H1 (cell line): ENCODE measurements at regions of chr11 and their contacts with region 1.

Region 1: DNA sequence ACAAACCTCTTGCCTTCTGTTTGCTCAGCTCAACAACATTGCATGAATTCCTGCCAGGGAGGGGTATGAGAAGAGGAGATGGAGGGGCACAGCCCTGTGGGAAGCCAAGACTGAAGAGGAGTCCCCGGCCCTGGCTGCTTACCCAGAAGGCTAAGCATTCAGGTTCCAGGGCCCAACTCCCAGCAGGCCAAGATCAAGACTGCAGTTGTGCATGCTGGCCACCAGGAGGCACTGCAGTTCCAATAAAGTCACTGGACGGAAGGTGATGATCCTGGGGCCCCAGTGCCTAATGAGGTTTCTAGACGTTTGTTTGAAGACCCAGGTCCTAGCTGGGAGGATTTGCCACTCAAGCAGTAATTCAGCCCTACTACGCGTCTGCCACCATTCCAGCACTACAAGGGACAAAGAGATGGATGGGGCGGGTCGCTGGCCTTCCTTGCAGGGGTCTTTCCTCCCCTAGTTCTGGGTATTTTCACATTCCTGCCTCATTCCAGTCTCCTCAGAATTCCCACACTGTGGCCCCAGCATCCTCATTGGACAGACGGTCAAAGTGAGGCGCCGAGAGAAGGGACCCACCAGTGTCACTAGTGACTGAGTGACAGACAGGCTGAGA is 23.6 kb downstream of the ALX4 start:
- DNase-seq: peak in 1 of 2 experiments; percentile 89
- H3K4me3 ChIP-seq: no peak overlapping the region
- H3K27ac ChIP-seq: no peak overlapping the region
- H3K4me1 ChIP-seq: peaks cover 0 to 2% (median 0%) of the 10 kb centered on the region in 4 experiments; a peak in 1 of 7 replicates
- H3K27me3 ChIP-seq: no peaks in the 10 kb centered on the region
- CTCF ChIP-seq: peak; percentile 96 to 99 (median 98)
- EP300 ChIP-seq: peak in 1 of 2 experiments; percentile 27; a peak in 1 of 3 replicates
- POLR2A ChIP-seq: no peak
- RAD21 ChIP-seq: peak; percentile 96 to 98

Region 2: GRCh38 chr11:44261800-44262591 is 24.4 kb before region 1 on chr11:
- CTCF ChIA-PET with region 1: interaction called, 14 read pairs
- POLR2A ChIA-PET with region 1: no interaction called
- DNase-seq: no peak
- H3K4me3 ChIP-seq: no peak overlapping the region
- H3K27ac ChIP-seq: no peak overlapping the region
- H3K4me1 ChIP-seq: no peaks in the 10 kb centered on the region; a peak in 2 of 7 replicates
- H3K27me3 ChIP-seq: no peaks in the 10 kb centered on the region
- CTCF ChIP-seq: no peak
- EP300 ChIP-seq: no peak
- POLR2A ChIP-seq: no peak
- RAD21 ChIP-seq: no peak

Region 3: DNA sequence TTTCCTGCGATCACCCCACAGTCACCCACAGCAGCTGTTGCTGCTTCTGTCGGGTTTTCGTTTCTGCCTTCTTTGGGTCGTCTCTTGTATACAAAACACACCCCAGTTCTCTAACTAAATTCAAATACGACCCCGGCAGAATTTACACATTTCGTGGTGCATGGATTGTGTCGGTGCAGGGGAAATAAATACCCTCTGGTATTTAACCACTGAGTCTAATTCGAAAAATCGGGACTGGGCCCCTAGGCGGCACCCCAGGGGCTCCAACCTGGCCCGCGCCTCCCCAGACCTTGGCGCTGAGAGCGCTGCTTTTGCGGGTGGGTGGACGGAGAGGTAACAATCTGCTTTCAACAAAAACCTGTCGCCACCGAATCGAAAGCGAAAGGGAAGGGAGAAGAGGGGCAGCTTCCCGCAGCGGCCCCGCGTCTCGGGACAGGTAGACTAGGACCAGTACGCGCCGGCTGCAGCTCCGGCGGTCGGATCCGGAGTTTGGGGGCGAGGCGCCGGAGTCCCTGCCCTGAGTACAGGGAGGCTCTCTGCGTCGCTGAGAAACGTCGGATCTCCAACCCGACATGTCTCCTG is 19.2 kb after region 1 on chr11:
- CTCF ChIA-PET with region 1: interaction called, 22 read pairs
- POLR2A ChIA-PET with region 1: no interaction called
- DNase-seq: no peak
- H3K4me3 ChIP-seq: peak overlapping the region; percentile 9 to 44 (median 22); a peak in 6 of 8 replicates
- H3K27ac ChIP-seq: no peak overlapping the region
- H3K4me1 ChIP-seq: peaks cover 0 to 26% (median 17%) of the 10 kb centered on the region in 4 experiments; a peak in 6 of 7 replicates
- H3K27me3 ChIP-seq: peaks cover 86 to 100% (median 98%) of the 10 kb centered on the region in 4 experiments
- CTCF ChIP-seq: no peak
- EP300 ChIP-seq: no peak
- POLR2A ChIP-seq: no peak
- RAD21 ChIP-seq: no peak

Region 4: DNA sequence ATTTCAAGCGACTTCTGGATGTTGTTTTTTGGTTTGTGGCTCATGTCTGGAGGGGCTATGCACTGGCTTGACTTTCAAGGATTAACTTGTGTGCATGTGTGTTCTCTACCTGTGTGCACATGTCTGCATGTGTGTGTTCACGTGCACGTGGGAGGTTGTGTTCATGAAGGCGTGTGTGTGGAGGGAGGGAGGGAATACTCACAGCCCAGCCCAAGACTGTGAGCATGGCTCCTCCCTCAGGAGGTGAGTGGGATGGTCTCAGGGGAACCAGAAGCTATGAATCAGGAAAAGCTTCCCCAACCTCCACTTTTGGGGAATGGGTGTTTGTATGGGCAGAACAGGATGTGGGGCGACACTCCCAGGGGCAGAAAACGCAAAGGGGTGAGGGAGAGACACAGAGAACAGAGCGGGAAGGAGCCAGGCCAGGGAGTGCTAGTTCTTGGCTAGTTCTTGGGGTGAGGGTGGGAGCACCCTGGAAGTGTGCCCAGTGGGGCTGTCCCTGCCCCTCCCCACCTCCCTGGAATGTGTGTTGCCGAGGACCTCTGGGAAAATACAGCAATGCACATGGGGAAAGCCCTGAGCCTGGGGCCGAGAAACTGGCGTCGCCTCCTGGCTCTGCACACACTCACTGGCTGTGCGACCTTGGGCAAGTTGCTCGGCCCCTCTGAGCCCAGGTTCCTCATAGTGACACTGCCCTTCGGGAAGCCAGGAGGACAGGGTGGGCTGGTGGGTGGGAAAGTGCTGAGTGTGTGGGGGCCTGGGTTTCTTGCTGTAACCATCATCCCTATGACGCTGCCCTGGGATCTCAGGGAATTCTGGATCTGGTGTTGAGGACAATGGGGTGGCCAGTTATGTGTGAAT is 40.5 kb after region 1 on chr11:
- CTCF ChIA-PET with region 1: interaction called, 47 read pairs
- POLR2A ChIA-PET with region 1: no interaction called
- DNase-seq: no peak
- H3K4me3 ChIP-seq: no peak overlapping the region
- H3K27ac ChIP-seq: no peak overlapping the region
- H3K4me1 ChIP-seq: peaks cover 0 to 4% (median 1%) of the 10 kb centered on the region in 4 experiments; a peak in 3 of 7 replicates
- H3K27me3 ChIP-seq: peaks cover 30 to 76% (median 70%) of the 10 kb centered on the region in 4 experiments
- CTCF ChIP-seq: peak; percentile 30 to 39 (median 32); a peak in 3 of 4 replicates
- EP300 ChIP-seq: no peak
- POLR2A ChIP-seq: no peak
- RAD21 ChIP-seq: peak; percentile 59

Region 5: GRCh38 chr11:44531116-44531504 is 244.7 kb after region 1 on chr11:
- CTCF ChIA-PET with region 1: interaction called, 20 read pairs
- POLR2A ChIA-PET with region 1: no interaction called
- DNase-seq: no peak
- H3K4me3 ChIP-seq: no peak overlapping the region
- H3K27ac ChIP-seq: no peak overlapping the region
- H3K4me1 ChIP-seq: peaks cover 0 to 2% (median 0%) of the 10 kb centered on the region in 4 experiments; a peak in 5 of 7 replicates
- H3K27me3 ChIP-seq: no peaks in the 10 kb centered on the region
- CTCF ChIP-seq: no peak
- EP300 ChIP-seq: no peak
- POLR2A ChIP-seq: no peak
- RAD21 ChIP-seq: no peak